ENCODE measurements at regions of chr1 and their contacts with region 1.

Region 1: GRCh38 chr1:64051796-64052195 is 151.6 kb upstream of the UBE2U start:
- DNase-seq: no peak
- ATAC-seq: no peak
- H3K4me3 ChIP-seq: no peak overlapping the region
- H3K4me3 Mint-ChIP-seq: no peak overlapping the region
- H3K27ac ChIP-seq: no peak overlapping the region
- H3K27ac Mint-ChIP-seq: no peak overlapping the region
- H3K4me1 ChIP-seq: no peaks in the 10 kb centered on the region
- H3K4me1 Mint-ChIP-seq: no peaks in the 10 kb centered on the region
- H3K27me3 ChIP-seq: no peaks in the 10 kb centered on the region
- H3K27me3 Mint-ChIP-seq: no peaks in the 10 kb centered on the region
- CTCF ChIP-seq: no peak

Region 2: GRCh38 chr1:62424411-62424810 is 1627.4 kb before region 1 on chr1:
- CTCF ChIA-PET with region 1: no interaction called
- POLR2A ChIA-PET with region 1: no interaction called
- intact Hi-C with region 1: no loop called
- DNase-seq: no peak
- ATAC-seq: no peak
- H3K4me3 ChIP-seq: no peak overlapping the region
- H3K4me3 Mint-ChIP-seq: no peak overlapping the region
- H3K27ac ChIP-seq: no peak overlapping the region
- H3K27ac Mint-ChIP-seq: no peak overlapping the region
- H3K4me1 ChIP-seq: no peaks in the 10 kb centered on the region
- H3K4me1 Mint-ChIP-seq: no peaks in the 10 kb centered on the region
- H3K27me3 ChIP-seq: no peaks in the 10 kb centered on the region
- H3K27me3 Mint-ChIP-seq: no peaks in the 10 kb centered on the region
- CTCF ChIP-seq: no peak

Region 3: DNA sequence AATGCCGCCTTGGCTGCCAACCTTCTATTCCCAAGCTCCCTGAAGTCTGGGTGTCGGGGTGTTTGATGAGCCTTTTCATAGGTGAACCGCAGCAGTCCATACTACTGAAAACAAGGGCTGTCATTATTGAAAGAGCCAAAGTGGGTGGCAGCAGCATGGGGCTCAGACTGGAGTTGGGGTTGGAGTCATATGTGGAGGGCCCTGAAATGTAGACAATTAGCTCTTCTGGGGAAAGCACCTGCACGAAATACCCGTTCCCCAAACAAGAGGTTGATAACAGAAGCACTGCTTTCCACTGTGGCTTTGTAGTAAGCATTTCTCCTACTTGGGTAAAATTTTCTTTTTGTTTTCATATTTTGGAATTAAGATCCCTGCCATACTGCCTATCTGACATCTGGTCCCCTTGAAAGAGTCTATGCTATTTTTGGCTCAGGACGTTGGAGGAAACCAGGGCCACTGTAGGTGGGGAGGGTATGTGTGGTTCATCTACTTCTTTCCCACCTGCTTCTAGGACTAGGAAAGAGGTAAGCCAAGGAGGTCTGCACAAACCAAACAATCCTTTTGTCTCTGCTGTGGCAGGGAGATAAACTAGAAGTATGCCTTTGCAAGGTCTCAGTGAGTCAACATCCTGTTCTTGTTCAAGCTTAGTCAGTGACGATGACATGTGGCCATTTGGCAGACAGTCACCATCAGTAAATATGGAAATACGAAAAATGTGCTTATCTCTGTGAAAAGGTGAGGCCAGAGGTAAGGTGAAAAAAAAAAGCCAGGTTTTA is 45.3 kb before region 1 on chr1:
- CTCF ChIA-PET with region 1: no interaction called
- POLR2A ChIA-PET with region 1: no interaction called
- intact Hi-C with region 1: loop called (anchors 5 kb)
- DNase-seq: no peak
- ATAC-seq: no peak
- H3K4me3 ChIP-seq: no peak overlapping the region
- H3K4me3 Mint-ChIP-seq: no peak overlapping the region
- H3K27ac ChIP-seq: no peak overlapping the region
- H3K27ac Mint-ChIP-seq: no peak overlapping the region
- H3K4me1 ChIP-seq: no peaks in the 10 kb centered on the region
- H3K4me1 Mint-ChIP-seq: peaks cover 3% of the 10 kb centered on the region
- H3K27me3 ChIP-seq: no peaks in the 10 kb centered on the region
- H3K27me3 Mint-ChIP-seq: peaks cover 7% of the 10 kb centered on the region
- CTCF ChIP-seq: no peak

Region 4: DNA sequence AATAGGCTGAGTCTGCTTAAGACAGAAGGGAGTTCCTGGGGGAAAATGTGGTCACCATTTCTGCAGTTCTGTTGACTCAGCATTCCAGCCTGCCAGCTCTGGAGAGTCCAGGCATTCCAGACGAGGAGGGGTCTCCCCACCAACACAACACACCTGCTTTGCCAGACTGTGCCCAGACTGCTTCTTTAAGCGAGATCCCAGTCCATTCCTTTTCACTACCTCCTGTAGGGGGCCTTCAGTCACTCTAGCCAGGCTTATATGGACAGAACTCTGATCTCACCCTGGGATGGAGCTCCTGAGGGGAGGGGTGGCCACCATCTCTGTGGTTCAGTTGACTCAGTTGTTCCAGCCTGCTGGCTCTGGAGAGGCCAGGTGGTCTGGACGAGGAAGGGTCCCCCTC is 200.2 kb after region 1 on chr1:
- CTCF ChIA-PET with region 1: no interaction called
- POLR2A ChIA-PET with region 1: no interaction called
- intact Hi-C with region 1: no loop called
- DNase-seq: no peak
- ATAC-seq: no peak
- H3K4me3 ChIP-seq: no peak overlapping the region
- H3K4me3 Mint-ChIP-seq: no peak overlapping the region
- H3K27ac ChIP-seq: no peak overlapping the region
- H3K27ac Mint-ChIP-seq: no peak overlapping the region
- H3K4me1 ChIP-seq: no peaks in the 10 kb centered on the region
- H3K4me1 Mint-ChIP-seq: no peaks in the 10 kb centered on the region
- H3K27me3 ChIP-seq: peaks cover 0 to 7% (median 1%) of the 10 kb centered on the region in 4 experiments
- H3K27me3 Mint-ChIP-seq: peaks cover 36% of the 10 kb centered on the region
- CTCF ChIP-seq: no peak

Measured in B cell (primary cell).